ENCODE measurements at regions of chr5 and their contacts with region 1.

Region 1: DNA sequence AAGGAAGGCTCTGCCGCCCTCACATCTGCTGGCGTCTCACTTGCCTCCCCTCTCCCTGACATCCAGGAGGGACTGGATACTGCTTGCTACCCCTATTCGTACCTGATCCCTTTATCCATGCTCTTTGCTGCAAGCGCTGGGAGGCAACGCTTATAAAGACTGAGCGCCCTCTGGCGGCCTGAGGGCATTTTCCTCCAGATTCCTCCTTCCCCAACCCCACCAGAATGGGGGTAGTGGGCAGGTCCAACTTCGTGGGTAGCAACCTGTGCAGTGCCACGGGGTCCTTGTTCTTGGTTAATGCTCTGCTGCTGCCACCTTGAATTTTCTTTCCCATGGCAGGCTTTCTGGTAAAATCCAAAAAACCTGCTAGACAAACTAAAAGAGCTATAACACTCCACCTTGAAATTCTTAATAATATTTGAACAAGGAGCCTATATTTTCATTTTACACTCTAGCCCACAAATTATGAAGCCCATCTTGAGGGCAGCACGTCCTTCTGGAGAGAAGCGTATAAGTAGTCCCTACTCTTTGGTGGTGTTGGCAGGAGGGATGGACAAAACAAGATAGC is 52.4 kb downstream of the JADE2 start:
- DNase-seq: no peak
- H3K4me3 ChIP-seq: no peak overlapping the region
- H3K27ac ChIP-seq: no peak overlapping the region
- H3K4me1 ChIP-seq: peaks cover 0 to 55% (median 33%) of the 10 kb centered on the region in 3 donors
- H3K27me3 ChIP-seq: no peaks in the 10 kb centered on the region
- CTCF ChIP-seq: peak; percentile 68 to 82 (median 78)
- POLR2A ChIP-seq: no peak

Region 2: DNA sequence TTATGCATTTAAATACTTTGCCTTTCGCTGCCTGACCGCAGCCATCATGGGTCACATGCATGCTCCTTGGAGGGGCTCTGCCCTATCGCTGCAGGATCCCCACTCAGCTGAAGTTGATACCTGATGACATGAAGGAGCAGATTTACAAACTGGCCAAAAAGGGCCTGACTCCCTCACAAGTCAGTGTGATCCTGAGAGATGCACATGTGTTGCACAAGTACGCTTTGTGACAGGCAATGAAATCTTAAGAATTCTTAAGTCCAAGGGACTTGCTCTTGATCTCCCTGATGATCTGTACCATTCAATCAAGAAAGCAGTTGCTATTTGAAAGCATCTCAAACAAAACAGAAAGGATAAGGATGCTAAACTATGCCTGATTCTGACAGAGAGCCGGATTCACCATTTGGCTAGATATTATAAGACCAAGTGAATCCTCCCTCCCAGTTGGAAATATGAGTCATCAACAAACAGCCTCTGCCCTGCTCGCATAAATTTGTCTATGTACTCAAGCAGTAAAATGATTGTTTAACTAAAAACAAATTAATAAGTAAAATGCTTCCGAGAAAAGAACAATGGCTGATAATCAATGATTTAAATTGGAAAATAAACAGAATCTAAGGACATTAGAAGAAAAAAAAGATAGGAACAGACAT is 310.4 kb before region 1 on chr5:
- intact Hi-C with region 1: no loop called
- DNase-seq: no peak
- H3K4me3 ChIP-seq: no peak overlapping the region
- H3K27ac ChIP-seq: no peak overlapping the region
- H3K4me1 ChIP-seq: no peaks in the 10 kb centered on the region
- H3K27me3 ChIP-seq: no peaks in the 10 kb centered on the region
- CTCF ChIP-seq: no peak
- POLR2A ChIP-seq: no peak

Region 3: GRCh38 chr5:134304311-134304710 is 273.6 kb before region 1 on chr5:
- intact Hi-C with region 1: loop called (anchors 5 kb)
- DNase-seq: no peak
- H3K4me3 ChIP-seq: no peak overlapping the region
- H3K27ac ChIP-seq: no peak overlapping the region
- H3K4me1 ChIP-seq: peaks cover 0 to 5% (median 0%) of the 10 kb centered on the region in 3 donors
- H3K27me3 ChIP-seq: no peaks in the 10 kb centered on the region
- CTCF ChIP-seq: no peak
- POLR2A ChIP-seq: no peak

Region 4: DNA sequence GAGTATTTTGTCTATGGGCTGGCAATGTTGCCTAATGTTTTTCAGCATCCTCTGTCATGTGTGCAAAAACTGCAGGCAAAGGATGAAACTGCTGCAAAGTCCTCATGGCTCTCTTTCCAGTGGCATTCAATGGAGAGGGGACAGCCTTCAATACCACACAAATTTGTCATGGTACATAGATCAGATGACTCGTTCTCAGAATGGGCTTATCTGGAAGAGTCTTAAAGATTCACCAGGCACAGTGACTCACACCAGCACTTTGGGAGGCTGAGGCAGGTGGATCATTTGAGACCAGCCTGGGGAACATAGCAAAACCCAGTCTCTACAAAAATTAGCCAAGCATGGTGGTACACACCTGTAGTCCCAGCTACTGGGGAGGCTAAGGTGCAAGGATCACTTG is 171.5 kb before region 1 on chr5:
- intact Hi-C with region 1: loop called (anchors 5 kb)
- DNase-seq: no peak
- H3K4me3 ChIP-seq: no peak overlapping the region
- H3K27ac ChIP-seq: no peak overlapping the region
- H3K4me1 ChIP-seq: peaks cover 5 to 33% (median 14%) of the 10 kb centered on the region in 3 donors
- H3K27me3 ChIP-seq: no peaks in the 10 kb centered on the region
- CTCF ChIP-seq: no peak
- POLR2A ChIP-seq: no peak

Region 5: DNA sequence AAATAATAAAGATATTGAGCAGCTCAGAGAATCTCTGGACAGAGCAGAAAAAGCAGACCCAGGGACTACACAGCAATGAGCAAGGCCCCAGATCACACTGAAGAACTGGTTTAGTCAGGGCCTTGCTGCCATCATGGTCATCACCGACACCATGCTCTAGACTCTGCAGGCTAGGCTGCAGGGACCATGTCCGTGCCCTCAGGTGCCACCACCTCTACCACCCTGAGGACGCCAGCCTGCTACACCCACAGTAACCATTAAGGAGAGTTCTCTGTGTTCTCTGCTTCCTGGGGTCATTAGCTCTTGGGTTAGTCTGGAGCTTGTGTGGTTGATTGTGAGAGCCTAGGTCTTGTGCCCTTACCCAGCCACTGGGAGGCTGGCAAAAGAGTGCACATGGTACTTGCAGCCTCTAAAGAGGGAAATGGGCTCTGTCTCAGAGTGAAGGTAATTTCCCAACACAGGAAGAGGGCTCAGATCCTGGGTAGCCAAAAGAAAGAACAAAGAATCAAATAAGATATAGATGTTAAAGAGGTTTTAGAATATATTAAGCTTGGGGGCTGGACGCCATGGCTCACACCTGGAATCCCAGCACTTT is 84.3 kb before region 1 on chr5:
- intact Hi-C with region 1: no loop called
- DNase-seq: no peak
- H3K4me3 ChIP-seq: no peak overlapping the region
- H3K27ac ChIP-seq: no peak overlapping the region
- H3K4me1 ChIP-seq: no peaks in the 10 kb centered on the region
- H3K27me3 ChIP-seq: no peaks in the 10 kb centered on the region
- CTCF ChIP-seq: no peak
- POLR2A ChIP-seq: no peak

Region 6: DNA sequence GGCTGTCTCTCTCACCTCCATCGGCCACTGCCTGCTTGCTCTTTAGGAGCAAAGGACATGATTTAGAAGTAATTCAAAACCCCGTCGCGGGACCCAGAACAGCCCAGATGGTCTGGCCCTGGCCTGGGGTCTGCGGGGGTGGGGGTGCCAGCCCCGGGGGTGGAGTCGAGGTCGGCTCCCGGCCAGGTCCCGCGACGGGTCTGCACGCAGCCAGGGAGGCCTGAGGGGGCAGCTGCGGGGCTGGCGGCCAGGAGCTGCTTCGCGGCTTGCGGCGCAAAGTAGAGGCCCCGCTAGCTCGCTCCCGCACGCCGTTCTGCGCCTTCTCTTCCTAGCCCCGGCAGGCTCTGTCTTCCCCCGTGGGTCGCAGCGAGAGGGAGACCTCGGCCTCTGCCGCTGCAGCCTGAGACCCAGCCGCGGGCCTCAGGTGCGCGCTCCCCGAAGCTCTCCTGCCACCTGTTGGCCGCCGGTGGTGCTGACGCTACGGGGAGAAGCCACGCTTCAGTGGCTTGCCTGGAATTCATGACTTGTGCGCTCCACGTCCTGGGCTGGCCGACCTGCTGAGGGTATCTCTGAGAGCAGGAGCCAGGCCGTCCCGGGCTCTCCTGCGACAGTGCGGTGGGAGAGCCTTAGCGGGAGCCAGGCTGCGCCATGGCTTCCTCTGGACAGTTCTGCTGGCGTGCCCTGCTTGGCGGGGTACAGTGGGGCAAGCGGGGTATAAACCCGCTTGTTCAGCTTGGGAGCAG is 613.4 kb after region 1 on chr5:
- intact Hi-C with region 1: no loop called
- DNase-seq: no peak
- H3K4me3 ChIP-seq: peak overlapping the region; percentile 30 to 71 (median 48)
- H3K27ac ChIP-seq: peak overlapping the region; percentile 90 to 97 (median 94)
- H3K4me1 ChIP-seq: peaks cover 12 to 97% (median 44%) of the 10 kb centered on the region in 3 donors
- H3K27me3 ChIP-seq: peaks cover 0 to 8% (median 0%) of the 10 kb centered on the region in 4 donors
- CTCF ChIP-seq: peak; percentile 82 to 98 (median 95)
- POLR2A ChIP-seq: peak in 2 of 4 donors; percentile 47 to 70

Measured in esophagus squamous epithelium (tissue), 5 donors.